WTC11 (cell line): ENCODE measurements at regions of chr2 and their contacts with region 1.

Region 1: GRCh38 chr2:47653902-47654789 is 128.8 kb upstream of the MSH6 start:
- DNase-seq: peak; percentile 57
- ATAC-seq: peak; percentile 83
- H3K4me3 Mint-ChIP-seq: no peak overlapping the region
- H3K27ac Mint-ChIP-seq: peak overlapping the region; percentile 64; the same call in 1 of the 2 replicates
- H3K4me1 Mint-ChIP-seq: peaks cover 44% of the 10 kb centered on the region
- H3K27me3 Mint-ChIP-seq: peaks cover 4% of the 10 kb centered on the region
- CTCF ChIP-seq: peak; percentile 32; the same call in 1 of the 2 replicates

Region 2: DNA sequence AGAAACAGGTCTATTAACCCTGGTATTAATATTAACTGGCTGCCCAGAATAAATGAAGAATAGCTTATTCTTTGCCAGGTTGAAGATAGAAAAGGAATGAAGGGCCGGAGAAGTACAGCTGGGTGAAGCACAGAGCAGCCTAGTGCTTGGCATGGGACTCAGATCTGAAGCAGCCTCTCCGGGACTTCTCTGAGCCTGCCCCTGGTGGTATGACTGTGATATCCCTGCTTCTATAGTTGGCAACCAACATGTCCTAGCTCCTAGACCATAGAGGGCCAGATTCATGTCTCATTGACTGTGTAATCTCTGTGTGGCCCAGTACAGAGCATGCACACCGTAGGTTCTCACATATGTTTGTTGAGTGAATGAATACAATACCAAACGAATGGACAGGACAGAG is 143.4 kb before region 1 on chr2:
- CTCF ChIA-PET with region 1: interaction called, 17 read pairs
- POLR2A ChIA-PET with region 1: no interaction called
- DNase-seq: no peak
- ATAC-seq: peak; percentile 75
- H3K4me3 Mint-ChIP-seq: no peak overlapping the region
- H3K27ac Mint-ChIP-seq: no peak overlapping the region
- H3K4me1 Mint-ChIP-seq: peaks cover 15% of the 10 kb centered on the region
- H3K27me3 Mint-ChIP-seq: peaks cover 3% of the 10 kb centered on the region; the same call in 1 of the 2 replicates
- CTCF ChIP-seq: no peak

Region 3: GRCh38 chr2:47631792-47632398 is 22.3 kb before region 1 on chr2:
- CTCF ChIA-PET with region 1: interaction called, 17 read pairs
- POLR2A ChIA-PET with region 1: no interaction called
- DNase-seq: no peak
- ATAC-seq: no peak
- H3K4me3 Mint-ChIP-seq: no peak overlapping the region
- H3K27ac Mint-ChIP-seq: no peak overlapping the region
- H3K4me1 Mint-ChIP-seq: peaks cover 33% of the 10 kb centered on the region
- H3K27me3 Mint-ChIP-seq: peaks cover 3% of the 10 kb centered on the region
- CTCF ChIP-seq: no peak

Region 4: DNA sequence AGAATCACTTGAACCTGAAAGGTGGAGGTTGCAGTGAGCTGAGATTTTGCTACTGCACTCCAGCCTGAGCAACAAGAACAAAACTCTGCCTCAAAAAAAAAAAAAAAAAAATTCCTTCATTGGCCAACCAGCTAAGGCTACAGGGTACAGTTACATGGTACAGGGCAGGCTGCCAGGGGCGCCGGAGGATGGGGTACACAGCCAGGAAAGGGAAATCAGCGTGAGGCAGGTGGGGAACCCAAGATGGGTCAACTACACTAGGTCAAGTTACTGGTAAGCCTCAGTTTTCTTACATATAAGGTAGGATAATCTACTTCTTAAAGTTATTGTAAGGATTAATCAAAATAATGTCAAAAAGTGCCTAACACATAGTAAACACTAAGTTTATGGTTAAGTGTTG is 13.8 kb before region 1 on chr2:
- CTCF ChIA-PET with region 1: interaction called, 27 read pairs
- POLR2A ChIA-PET with region 1: no interaction called
- DNase-seq: no peak
- ATAC-seq: no peak
- H3K4me3 Mint-ChIP-seq: no peak overlapping the region
- H3K27ac Mint-ChIP-seq: no peak overlapping the region
- H3K4me1 Mint-ChIP-seq: peaks cover 45% of the 10 kb centered on the region
- H3K27me3 Mint-ChIP-seq: no peaks in the 10 kb centered on the region; the same call in 1 of the 2 replicates
- CTCF ChIP-seq: no peak

Region 5: DNA sequence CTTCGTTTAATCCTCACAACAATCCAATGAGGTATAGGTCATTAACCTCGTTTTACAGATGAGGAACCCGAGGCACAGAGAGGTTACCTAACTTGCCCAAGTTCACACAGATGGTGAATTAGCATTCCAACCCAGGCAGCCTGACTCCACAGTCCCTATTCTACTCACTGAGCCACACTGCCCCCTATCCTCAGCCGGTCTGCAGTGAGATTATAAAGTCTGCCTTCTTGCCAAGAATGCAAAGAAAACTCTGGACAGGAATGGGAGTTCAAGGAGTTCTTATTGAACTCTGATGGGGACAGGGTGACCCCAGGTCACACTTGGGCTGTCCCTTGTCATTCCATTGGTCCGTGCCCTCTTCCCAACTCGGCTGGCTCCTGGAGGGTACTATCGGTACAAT is 10.7 kb after region 1 on chr2:
- CTCF ChIA-PET with region 1: interaction called, 29 read pairs
- POLR2A ChIA-PET with region 1: no interaction called
- DNase-seq: peak; percentile 39
- ATAC-seq: peak; percentile 71
- H3K4me3 Mint-ChIP-seq: no peak overlapping the region
- H3K27ac Mint-ChIP-seq: no peak overlapping the region
- H3K4me1 Mint-ChIP-seq: peaks cover 54% of the 10 kb centered on the region
- H3K27me3 Mint-ChIP-seq: no peaks in the 10 kb centered on the region
- CTCF ChIP-seq: no peak

Region 6: GRCh38 chr2:47697000-47697601 is 43.0 kb after region 1 on chr2:
- CTCF ChIA-PET with region 1: interaction called, 16 read pairs
- POLR2A ChIA-PET with region 1: no interaction called
- DNase-seq: no peak
- ATAC-seq: no peak
- H3K4me3 Mint-ChIP-seq: no peak overlapping the region
- H3K27ac Mint-ChIP-seq: peak overlapping the region; percentile 96
- H3K4me1 Mint-ChIP-seq: peaks cover 64% of the 10 kb centered on the region
- H3K27me3 Mint-ChIP-seq: no peaks in the 10 kb centered on the region
- CTCF ChIP-seq: no peak

Region 7: DNA sequence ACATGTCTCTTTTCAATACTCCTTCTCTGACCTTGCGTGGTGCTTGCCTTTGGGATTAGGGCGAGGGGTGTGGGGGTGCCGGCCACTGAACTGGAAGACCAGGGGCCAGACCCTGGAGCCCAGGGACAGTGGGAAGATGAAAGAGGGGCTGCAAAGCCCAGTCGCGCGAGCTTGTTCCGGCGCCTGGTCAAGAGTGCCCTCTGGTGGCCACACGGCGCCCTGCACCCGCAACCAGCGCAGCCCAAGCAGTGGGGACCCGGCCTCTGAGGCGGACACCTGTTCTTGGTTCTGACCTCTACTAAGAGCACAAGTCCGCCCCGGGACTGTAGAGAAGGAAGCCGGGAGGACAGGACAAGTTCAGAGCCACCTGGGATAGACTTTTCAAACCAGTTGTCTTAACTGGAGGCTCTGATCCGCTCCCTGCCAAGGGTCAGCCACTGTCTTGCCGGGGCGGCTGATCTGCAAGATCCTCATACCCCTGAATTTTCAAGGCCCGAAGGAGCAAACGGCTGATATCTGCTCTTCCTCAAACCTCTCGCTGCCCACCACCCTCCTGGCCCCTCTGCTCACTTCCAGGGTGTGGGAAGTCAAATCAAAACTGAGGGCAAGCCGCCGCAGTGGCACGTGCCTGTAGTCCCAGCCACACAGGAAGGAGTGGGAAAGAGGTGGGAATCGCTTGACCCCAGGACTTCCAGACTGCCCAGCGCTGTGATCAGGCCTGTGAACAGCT is 113.9 kb after region 1 on chr2:
- CTCF ChIA-PET with region 1: interaction called, 58 read pairs
- POLR2A ChIA-PET with region 1: no interaction called
- DNase-seq: peak; percentile 90
- ATAC-seq: peak; percentile 92
- H3K4me3 Mint-ChIP-seq: no peak overlapping the region
- H3K27ac Mint-ChIP-seq: no peak overlapping the region
- H3K4me1 Mint-ChIP-seq: peaks cover 20% of the 10 kb centered on the region
- H3K27me3 Mint-ChIP-seq: no peaks in the 10 kb centered on the region
- CTCF ChIP-seq: peak; percentile 99